Left ventricle myocardium superior (tissue), 1 donor: ENCODE measurements at regions of chr5 and their contacts with region 1.

Region 1: GRCh38 chr5:35003018-35003957 is 44.5 kb downstream of the AGXT2 start:
- DNase-seq: peak; percentile 40
- ATAC-seq: peak; percentile 61

Region 2: GRCh38 chr5:34486160-34486848 is 517.0 kb before region 1 on chr5:
- intact Hi-C with region 1: loop called (anchors 10 kb)
- DNase-seq: peak; percentile 89
- ATAC-seq: peak; percentile 81

Region 3: GRCh38 chr5:34533582-34534522 is 469.4 kb before region 1 on chr5:
- intact Hi-C with region 1: no loop called
- DNase-seq: no peak
- ATAC-seq: no peak